Endothelial cell of umbilical vein (primary cell): ENCODE measurements at regions of chr12 and their contacts with region 1.

Region 1: GRCh38 chr12:5745265-5745888 is 199.7 kb downstream of the ANO2 start:
- DNase-seq: peak; percentile 93
- H3K4me3 ChIP-seq: no peak overlapping the region
- H3K27ac ChIP-seq: peak overlapping the region; percentile 39
- H3K4me1 ChIP-seq: peaks cover 16% of the 10 kb centered on the region
- H3K27me3 ChIP-seq: no peaks in the 10 kb centered on the region
- CTCF ChIP-seq: peak; percentile 93 to 95
- POLR2A ChIP-seq: no peak

Region 2: DNA sequence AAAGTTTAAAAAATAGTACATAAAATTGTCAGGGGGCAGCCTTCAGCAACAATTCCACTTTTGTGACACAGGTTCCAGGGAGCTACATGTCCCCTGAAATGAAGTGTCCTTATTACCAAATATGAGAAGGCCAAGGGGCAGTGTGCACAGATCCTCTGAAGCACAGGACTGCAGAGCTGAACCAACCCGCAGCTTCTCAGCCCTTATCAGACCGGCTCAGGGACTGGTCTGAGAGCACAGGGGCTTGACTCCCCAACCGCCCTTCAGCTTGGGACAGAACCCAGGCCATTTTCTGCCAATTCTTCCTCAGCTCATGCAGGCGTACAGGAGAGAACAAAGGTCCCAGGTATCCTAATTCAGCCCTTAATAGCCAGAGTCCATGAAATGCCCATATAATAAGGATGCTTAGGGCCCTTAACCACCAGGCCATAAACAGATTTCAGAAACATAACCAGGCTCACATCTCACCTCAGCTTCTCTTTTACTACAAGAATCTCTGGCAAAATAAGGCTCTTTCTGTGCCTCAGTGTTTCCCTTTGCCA is 21.6 kb before region 1 on chr12:
- CTCF ChIA-PET with region 1: interaction called, 12 read pairs
- POLR2A ChIA-PET with region 1: no interaction called
- dilution Hi-C with region 1: no loop called
- intact Hi-C with region 1: no loop called
- DNase-seq: no peak
- H3K4me3 ChIP-seq: no peak overlapping the region
- H3K27ac ChIP-seq: no peak overlapping the region
- H3K4me1 ChIP-seq: peaks cover 3% of the 10 kb centered on the region
- H3K27me3 ChIP-seq: no peaks in the 10 kb centered on the region
- CTCF ChIP-seq: no peak
- POLR2A ChIP-seq: no peak

Region 3: DNA sequence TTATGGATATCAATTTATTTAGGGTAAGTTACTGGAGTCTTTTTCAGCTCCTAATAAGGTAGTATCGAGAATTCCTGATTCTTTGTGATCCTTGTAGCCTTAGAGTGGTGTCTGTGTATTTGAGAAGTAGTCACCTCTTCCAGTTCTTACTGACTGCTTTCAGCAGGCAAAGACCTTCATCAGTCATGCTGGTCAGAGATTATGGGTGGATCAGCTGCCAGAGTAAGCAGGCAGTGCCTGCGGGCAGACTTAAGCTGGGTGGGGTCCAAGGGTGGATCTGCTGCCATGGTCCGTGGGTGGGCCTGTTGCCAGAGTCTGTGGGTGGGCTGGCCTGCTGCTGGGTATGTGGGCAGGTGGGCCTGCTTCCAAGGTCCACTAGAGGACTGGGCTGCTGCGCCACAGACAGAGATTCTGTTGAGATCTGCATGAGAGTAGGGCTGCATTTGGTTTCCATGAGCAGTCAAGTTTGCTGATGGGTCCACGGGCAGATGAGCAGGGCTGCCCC is 11.0 kb after region 1 on chr12:
- CTCF ChIA-PET with region 1: interaction called, 43 read pairs
- POLR2A ChIA-PET with region 1: no interaction called
- dilution Hi-C with region 1: no loop called
- intact Hi-C with region 1: no loop called
- DNase-seq: no peak
- H3K4me3 ChIP-seq: no peak overlapping the region
- H3K27ac ChIP-seq: no peak overlapping the region
- H3K4me1 ChIP-seq: no peaks in the 10 kb centered on the region
- H3K27me3 ChIP-seq: no peaks in the 10 kb centered on the region
- CTCF ChIP-seq: no peak
- POLR2A ChIP-seq: no peak

Region 4: DNA sequence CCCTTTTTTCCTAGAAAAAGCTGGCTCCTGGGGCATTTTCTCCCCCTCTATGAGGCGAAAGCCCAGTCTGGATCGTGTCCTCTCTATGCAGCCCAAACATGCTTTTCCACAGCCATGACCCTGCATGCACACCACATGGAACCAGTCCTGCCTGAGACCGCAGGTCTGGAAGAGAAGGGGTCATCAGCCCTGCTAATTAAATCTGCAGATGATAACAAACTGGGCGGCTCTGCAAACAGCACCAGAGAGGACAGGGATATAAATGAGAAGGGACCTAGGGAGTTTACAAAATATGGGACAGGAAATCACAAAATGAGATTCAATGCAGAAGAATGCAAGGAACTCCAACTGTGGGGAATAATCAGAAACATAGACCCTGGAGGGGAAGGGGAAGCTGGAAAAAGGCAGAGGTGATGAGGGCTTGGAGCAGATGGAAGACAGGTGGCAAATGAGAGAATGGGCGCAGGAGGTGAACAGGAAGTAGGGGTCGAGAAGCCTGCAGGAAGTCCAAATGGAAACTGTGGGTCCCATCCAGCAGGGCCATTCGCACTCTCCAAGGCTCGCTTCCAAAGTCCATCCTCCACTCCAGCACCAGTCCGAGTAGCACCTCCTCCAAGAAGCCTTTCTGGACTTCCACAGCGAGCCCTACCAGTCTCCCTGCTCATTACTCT is 123.4 kb after region 1 on chr12:
- CTCF ChIA-PET with region 1: interaction called, 6 read pairs
- POLR2A ChIA-PET with region 1: no interaction called
- dilution Hi-C with region 1: no loop called
- intact Hi-C with region 1: loop called (anchors 5 kb)
- DNase-seq: peak; percentile 65
- H3K4me3 ChIP-seq: no peak overlapping the region
- H3K27ac ChIP-seq: no peak overlapping the region
- H3K4me1 ChIP-seq: peaks cover 37% of the 10 kb centered on the region
- H3K27me3 ChIP-seq: no peaks in the 10 kb centered on the region
- CTCF ChIP-seq: no peak
- POLR2A ChIP-seq: peak; percentile 46

Region 5: DNA sequence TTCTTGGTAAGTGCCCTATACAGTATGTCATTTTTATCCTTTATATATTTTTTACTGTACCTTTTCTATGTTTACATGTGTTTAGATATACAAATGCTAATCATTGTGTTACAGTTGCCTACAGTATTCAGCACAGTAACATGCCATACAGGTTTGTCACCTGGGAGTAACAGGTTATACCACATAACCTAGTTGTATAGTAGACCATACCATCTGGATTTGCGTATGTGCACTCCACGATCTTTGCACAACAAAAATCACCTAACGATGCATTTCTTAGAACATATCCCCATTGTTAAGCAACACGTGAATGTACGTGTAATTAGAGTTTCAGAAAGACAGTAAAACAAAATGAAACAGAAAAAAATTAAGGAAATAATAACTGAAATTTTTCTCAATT is 211.6 kb after region 1 on chr12:
- CTCF ChIA-PET with region 1: no interaction called
- POLR2A ChIA-PET with region 1: no interaction called
- dilution Hi-C with region 1: no loop called
- intact Hi-C with region 1: no loop called
- DNase-seq: no peak
- H3K4me3 ChIP-seq: no peak overlapping the region
- H3K27ac ChIP-seq: no peak overlapping the region
- H3K4me1 ChIP-seq: no peaks in the 10 kb centered on the region
- H3K27me3 ChIP-seq: no peaks in the 10 kb centered on the region
- CTCF ChIP-seq: no peak
- POLR2A ChIP-seq: no peak